ENCODE measurements at regions of chr22 and their contacts with region 1.

Region 1: GRCh38 chr22:20020533-20021195 is at the start of gene TANGO2:
- DNase-seq: peak; percentile 94
- H3K4me3 Mint-ChIP-seq: peak within 1 kb of the TSS; percentile 91
- H3K27ac Mint-ChIP-seq: peak within 1 kb of the TSS; percentile 83
- H3K4me1 Mint-ChIP-seq: peaks cover 30% of the 10 kb centered on the region
- H3K27me3 Mint-ChIP-seq: no peaks in the 10 kb centered on the region
- total RNA-seq, gene TANGO2: 20.7 to 23.6 TPM

Region 2: DNA sequence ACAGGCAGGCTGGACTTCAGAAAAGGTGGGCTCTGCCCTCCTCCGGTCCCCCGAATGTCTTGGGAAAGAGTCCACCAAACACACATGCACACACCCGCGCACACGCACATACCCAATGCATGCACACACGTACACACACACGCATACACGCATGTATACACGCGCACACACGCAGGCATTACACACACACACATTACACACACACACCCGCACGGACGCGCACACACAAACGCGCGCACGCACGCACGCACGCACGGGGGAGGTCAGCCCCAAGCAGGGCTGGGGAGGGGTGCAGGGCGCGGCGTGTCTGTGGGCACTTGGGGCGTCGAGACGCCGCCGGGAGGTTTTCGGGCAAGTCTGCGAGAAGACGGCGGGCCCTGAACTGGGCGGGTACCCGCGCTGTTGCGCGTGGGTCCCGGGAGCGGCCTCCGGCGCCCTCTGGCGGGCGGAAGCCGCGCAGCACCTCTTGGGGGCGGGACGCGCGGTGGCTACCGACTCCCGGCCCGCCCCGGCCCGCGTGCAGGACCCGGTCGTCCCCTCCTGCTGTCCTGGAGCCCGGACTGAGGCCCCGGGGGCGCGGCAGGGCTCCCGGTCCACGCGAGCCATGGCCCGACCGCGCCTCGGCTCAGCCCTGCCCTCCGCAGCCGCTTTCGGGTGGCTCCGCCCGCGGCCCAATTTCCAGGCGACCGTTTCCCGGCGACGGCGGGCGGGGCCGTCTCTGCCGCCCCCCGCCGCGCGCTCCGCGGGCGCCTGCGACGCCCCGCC is 302.8 kb before region 1 on chr22:
- CTCF ChIA-PET with region 1: no interaction called
- POLR2A ChIA-PET with region 1: no interaction called
- intact Hi-C with region 1: no loop called
- DNase-seq: peak; percentile 83
- H3K4me3 Mint-ChIP-seq: peak overlapping the region; percentile 60
- H3K27ac Mint-ChIP-seq: no peak overlapping the region
- H3K4me1 Mint-ChIP-seq: peaks cover 8% of the 10 kb centered on the region
- H3K27me3 Mint-ChIP-seq: peaks cover 45% of the 10 kb centered on the region

Region 3: DNA sequence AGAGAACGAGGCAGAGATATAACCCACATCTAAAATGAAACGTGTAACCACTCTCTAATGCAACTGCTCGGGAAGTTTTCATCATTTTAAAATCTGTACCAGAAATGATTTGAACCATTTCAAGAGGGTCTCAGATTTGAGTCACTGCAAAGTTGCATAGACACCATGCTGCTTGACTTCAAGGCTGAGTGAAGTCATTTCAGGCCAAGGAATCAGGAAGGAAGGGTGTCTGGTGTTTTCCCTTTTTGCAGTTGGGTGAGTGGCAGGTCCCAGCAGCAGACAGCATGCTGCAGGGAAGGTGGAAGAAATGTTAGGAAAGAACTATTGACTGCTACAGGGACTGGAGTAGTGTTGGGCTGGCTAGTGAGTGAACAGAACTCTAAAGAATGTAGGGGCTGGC is 16.8 kb after region 1 on chr22:
- CTCF ChIA-PET with region 1: no interaction called
- POLR2A ChIA-PET with region 1: interaction called, 3 read pairs
- intact Hi-C with region 1: loop called (anchors 2 kb)
- DNase-seq: peak; percentile 42
- H3K4me3 Mint-ChIP-seq: no peak overlapping the region
- H3K27ac Mint-ChIP-seq: peak overlapping the region; percentile 75
- H3K4me1 Mint-ChIP-seq: peaks cover 23% of the 10 kb centered on the region
- H3K27me3 Mint-ChIP-seq: no peaks in the 10 kb centered on the region

Region 4: GRCh38 chr22:20079745-20080444 is 59.2 kb after region 1 on chr22 and contains the start of gene DGCR8:
- CTCF ChIA-PET with region 1: no interaction called
- POLR2A ChIA-PET with region 1: no interaction called
- intact Hi-C with region 1: loop called (anchors 1 kb)
- DNase-seq: peak; percentile 75
- H3K4me3 Mint-ChIP-seq: peak within 1 kb of the TSS; percentile 88
- H3K27ac Mint-ChIP-seq: peak within 1 kb of the TSS; percentile 79
- H3K4me1 Mint-ChIP-seq: peaks cover 37% of the 10 kb centered on the region
- H3K27me3 Mint-ChIP-seq: no peaks in the 10 kb centered on the region
- total RNA-seq, gene DGCR8: 33.4 to 34.3 TPM

Region 5: DNA sequence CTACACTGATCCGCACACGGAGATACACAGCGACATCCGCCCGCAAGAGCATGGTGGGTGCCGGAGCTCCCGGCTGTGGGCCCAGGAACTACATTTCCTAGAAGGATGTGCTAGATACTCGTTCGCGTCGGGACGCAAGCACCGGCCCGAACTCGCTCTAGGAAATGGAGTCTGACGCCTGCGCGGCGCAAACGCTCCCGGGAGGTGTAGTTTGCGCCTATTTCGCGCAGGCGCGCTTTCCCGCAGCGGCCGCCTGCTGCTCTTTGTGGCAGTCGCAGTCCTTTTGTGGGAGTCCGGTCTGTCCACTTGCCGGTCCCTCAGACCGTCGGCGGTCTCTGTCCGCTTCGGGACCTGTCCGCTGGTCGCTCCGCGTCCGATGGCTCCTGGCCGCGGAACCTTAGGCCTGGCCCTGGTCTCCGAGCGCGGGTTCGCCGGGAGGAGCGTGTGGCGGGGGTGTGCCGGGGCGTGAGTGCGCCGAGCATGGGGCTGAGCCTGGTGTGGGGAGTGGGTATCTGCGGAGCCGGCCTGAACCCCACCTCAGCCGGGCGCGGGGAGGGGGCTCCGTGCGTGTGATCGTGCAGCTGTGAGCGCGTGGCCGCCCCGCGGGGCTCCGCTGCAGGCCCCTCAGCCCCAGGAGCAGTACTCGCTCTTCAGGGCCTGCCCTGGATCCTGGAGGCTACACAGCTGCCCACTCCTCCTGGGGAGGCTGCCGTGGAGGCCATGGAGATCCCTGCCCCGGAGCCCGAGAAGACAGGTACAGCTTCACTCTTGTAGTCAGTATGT is 373.4 kb after region 1 on chr22 and contains the start of gene ZNF74:
- CTCF ChIA-PET with region 1: no interaction called
- POLR2A ChIA-PET with region 1: no interaction called
- intact Hi-C with region 1: loop called (anchors 5 kb)
- DNase-seq: peak; percentile 89
- H3K4me3 Mint-ChIP-seq: peak within 1 kb of the TSS; percentile 83
- H3K27ac Mint-ChIP-seq: peak within 1 kb of the TSS; percentile 85
- H3K4me1 Mint-ChIP-seq: peaks cover 22% of the 10 kb centered on the region
- H3K27me3 Mint-ChIP-seq: no peaks in the 10 kb centered on the region
- total RNA-seq, gene ZNF74: 6.8 to 9.0 TPM